Calu3 (cell line): ENCODE measurements at regions of chr13 and their contacts with region 1.

Region 1: DNA sequence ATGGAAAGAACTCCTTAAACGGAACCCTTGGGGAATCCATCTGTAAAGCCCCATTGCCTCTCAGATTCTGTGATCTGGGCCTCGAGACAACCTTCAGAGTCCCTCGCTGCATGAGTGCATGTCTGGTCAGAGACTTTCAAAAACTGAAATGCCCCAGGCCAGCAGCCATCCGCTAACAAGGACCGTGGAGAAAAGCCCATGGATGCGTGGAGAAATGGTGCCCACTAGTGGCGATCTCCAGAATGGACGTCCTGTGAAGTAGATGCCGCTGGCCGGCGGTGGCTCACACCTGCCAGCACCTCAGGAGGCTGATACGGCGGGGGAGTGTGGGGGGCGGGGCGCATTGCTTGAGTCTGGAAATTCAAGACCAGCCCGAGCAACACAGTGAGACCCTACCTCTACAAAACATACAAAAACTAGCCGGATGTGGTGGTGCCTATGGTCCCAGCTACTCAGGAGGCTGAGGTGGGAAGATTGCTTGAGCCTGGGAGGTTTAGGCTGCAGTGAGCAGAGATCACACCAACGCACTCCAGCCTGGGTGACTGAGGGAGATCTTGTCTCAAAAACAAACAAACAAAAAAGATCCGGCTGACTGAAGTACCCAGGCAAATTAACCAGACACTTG is 7.9 kb upstream of the CDC16 start:
- DNase-seq: peak; percentile 64
- H3K4me3 Mint-ChIP-seq: no peak overlapping the region
- H3K27ac Mint-ChIP-seq: no peak overlapping the region
- H3K4me1 Mint-ChIP-seq: no peaks in the 10 kb centered on the region
- H3K27me3 Mint-ChIP-seq: peaks cover 14% of the 10 kb centered on the region
- CTCF ChIP-seq: peak; percentile 59

Region 2: GRCh38 chr13:113951246-113951999 is 275.4 kb before region 1 on chr13:
- CTCF ChIA-PET with region 1: no interaction called
- intact Hi-C with region 1: loop called (anchors 5 kb)
- DNase-seq: peak; percentile 47
- H3K4me3 Mint-ChIP-seq: no peak overlapping the region
- H3K27ac Mint-ChIP-seq: no peak overlapping the region
- H3K4me1 Mint-ChIP-seq: no peaks in the 10 kb centered on the region
- H3K27me3 Mint-ChIP-seq: no peaks in the 10 kb centered on the region
- CTCF ChIP-seq: peak; percentile 28